A673 (cell line): ENCODE measurements at regions of chr12 and their contacts with region 1.

Region 1: DNA sequence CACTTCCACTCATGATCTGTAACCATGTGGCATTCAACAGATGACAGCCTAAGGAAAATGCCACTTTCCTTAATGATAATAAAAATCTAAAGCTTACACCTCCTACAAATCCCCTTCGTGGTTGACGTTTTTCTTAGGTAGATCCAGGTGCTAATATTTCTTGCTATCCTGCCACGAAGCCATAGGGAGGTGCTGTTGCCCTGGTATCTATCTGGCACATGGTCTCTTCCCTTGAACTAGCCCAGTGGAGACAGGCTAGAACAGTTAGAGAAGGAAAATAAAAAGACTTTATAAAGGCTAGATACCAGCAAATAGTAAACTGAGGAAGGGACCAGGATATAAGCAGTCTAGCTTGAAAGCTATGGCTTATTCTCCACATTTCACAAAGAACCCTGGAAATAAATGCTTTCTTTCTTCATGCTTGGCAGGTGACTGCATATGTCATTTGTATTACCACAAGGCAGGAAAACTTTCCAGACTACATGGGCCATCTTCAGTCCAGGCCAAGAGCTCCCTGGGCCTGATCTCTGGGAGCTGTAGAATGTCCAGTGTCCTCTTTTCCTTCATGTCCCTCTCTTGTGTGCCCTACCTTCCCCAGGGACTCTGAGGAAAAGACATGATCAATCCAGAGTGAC is 15.3 kb downstream of the SPIC start:
- DNase-seq: peak; percentile 45
- H3K4me3 ChIP-seq: no peak overlapping the region
- H3K27ac ChIP-seq: no peak overlapping the region
- H3K4me1 ChIP-seq: no peaks in the 10 kb centered on the region
- H3K27me3 ChIP-seq: no peaks in the 10 kb centered on the region
- CTCF ChIP-seq: peak; percentile 62

Region 2: GRCh38 chr12:100295764-100296555 is 1194.4 kb before region 1 on chr12:
- CTCF ChIA-PET with region 1: no interaction called
- POLR2A ChIA-PET with region 1: no interaction called
- intact Hi-C with region 1: no loop called
- DNase-seq: peak; percentile 11
- H3K4me3 ChIP-seq: no peak overlapping the region
- H3K27ac ChIP-seq: no peak overlapping the region
- H3K4me1 ChIP-seq: no peaks in the 10 kb centered on the region
- H3K27me3 ChIP-seq: no peaks in the 10 kb centered on the region
- CTCF ChIP-seq: no peak

Region 3: GRCh38 chr12:101733166-101733565 is 242.8 kb after region 1 on chr12:
- CTCF ChIA-PET with region 1: no interaction called
- POLR2A ChIA-PET with region 1: no interaction called
- intact Hi-C with region 1: no loop called
- DNase-seq: no peak
- H3K4me3 ChIP-seq: no peak overlapping the region
- H3K27ac ChIP-seq: no peak overlapping the region
- H3K4me1 ChIP-seq: no peaks in the 10 kb centered on the region
- H3K27me3 ChIP-seq: no peaks in the 10 kb centered on the region
- CTCF ChIP-seq: no peak

Region 4: GRCh38 chr12:101749657-101750056 is 259.3 kb after region 1 on chr12:
- CTCF ChIA-PET with region 1: no interaction called
- POLR2A ChIA-PET with region 1: no interaction called
- intact Hi-C with region 1: loop called (anchors 5 kb)
- DNase-seq: no peak
- H3K4me3 ChIP-seq: no peak overlapping the region
- H3K27ac ChIP-seq: no peak overlapping the region
- H3K4me1 ChIP-seq: no peaks in the 10 kb centered on the region
- H3K27me3 ChIP-seq: no peaks in the 10 kb centered on the region
- CTCF ChIP-seq: no peak

Region 5: GRCh38 chr12:101830367-101831325 is 340.2 kb after region 1 on chr12 and contains the start of gene GNPTAB:
- CTCF ChIA-PET with region 1: no interaction called
- POLR2A ChIA-PET with region 1: no interaction called
- intact Hi-C with region 1: loop called (anchors 2 kb)
- DNase-seq: peak; percentile 95
- H3K4me3 ChIP-seq: peak within 1 kb of the TSS; percentile 81
- H3K27ac ChIP-seq: peak within 1 kb of the TSS; percentile 33
- H3K4me1 ChIP-seq: peaks cover 3% of the 10 kb centered on the region
- H3K27me3 ChIP-seq: no peaks in the 10 kb centered on the region
- CTCF ChIP-seq: peak; percentile 72
- total RNA-seq, gene GNPTAB: 19.9 and 21.7 TPM in 2 replicates